Mammary epithelial cell (primary cell): ENCODE measurements at regions of chr5 and their contacts with region 1.

Region 1: DNA sequence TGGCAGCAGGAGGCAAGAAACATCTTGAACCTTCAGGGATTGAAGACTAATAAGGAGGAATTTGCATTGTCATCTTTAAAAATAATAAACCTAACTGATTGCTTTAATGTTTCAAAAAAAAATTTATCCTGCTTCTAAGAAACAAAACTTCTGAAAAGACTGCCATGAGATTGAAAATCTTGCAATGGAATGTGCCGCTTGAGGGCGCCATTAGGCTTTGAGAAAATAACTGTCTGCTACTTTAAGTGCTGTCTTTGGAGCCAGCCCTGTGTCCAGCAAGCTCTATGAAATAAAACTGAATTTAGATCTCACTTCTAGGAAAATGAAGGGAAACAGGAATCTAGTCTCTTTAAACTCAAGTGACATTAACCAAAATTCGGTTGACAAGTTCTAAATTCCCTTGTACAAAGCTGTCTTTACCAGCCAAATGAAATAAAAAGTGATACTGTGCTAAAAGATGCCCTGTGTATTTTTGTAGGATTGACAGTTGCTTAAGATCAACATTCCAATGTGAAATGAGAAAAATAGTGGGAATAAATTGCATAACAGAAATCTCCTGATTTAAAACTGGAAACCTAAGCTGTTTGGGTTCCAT is 79.4 kb downstream of the ESM1 start:
- DNase-seq: peak; percentile 38
- H3K4me3 ChIP-seq: no peak overlapping the region
- H3K27ac ChIP-seq: no peak overlapping the region
- H3K4me1 ChIP-seq: no peaks in the 10 kb centered on the region
- H3K27me3 ChIP-seq: no peaks in the 10 kb centered on the region
- CTCF ChIP-seq: peak; percentile 74 to 76

Region 2: DNA sequence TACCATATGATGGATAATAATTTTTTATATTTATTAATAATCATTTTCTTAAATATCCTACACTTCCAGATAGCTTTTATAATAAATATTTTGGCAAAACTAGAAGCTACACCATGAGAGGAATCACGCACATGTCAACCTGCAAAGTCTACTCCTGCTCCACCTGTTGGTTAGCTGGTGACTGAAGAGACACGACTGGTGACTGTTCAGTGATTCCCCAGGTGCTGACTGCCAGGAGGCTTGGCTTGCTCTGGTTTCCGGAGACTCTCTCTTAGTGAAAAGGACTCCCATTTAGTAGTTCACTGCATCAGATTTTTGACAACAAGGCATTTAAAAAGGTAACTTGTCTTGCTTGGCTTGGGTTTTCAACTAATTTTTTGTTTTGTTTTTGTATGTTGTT is 217.3 kb after region 1 on chr5:
- CTCF ChIA-PET with region 1: no interaction called
- dilution Hi-C with region 1: no loop called
- in situ Hi-C with region 1: no loop called
- intact Hi-C with region 1: no loop called
- DNase-seq: no peak
- H3K4me3 ChIP-seq: no peak overlapping the region
- H3K27ac ChIP-seq: no peak overlapping the region
- H3K4me1 ChIP-seq: no peaks in the 10 kb centered on the region
- H3K27me3 ChIP-seq: peaks cover 3% of the 10 kb centered on the region
- CTCF ChIP-seq: no peak

Region 3: GRCh38 chr5:55146543-55147151 is 240.6 kb after region 1 on chr5:
- CTCF ChIA-PET with region 1: no interaction called
- dilution Hi-C with region 1: no loop called
- in situ Hi-C with region 1: loop called in 1 of 2 experiments (anchors 10 kb)
- intact Hi-C with region 1: loop called (anchors 1 kb)
- DNase-seq: peak; percentile 77
- H3K4me3 ChIP-seq: no peak overlapping the region
- H3K27ac ChIP-seq: no peak overlapping the region
- H3K4me1 ChIP-seq: no peaks in the 10 kb centered on the region
- H3K27me3 ChIP-seq: no peaks in the 10 kb centered on the region
- CTCF ChIP-seq: peak; percentile 89 to 98